H1 (cell line): ENCODE measurements at regions of chr10 and their contacts with region 1.

Region 1: DNA sequence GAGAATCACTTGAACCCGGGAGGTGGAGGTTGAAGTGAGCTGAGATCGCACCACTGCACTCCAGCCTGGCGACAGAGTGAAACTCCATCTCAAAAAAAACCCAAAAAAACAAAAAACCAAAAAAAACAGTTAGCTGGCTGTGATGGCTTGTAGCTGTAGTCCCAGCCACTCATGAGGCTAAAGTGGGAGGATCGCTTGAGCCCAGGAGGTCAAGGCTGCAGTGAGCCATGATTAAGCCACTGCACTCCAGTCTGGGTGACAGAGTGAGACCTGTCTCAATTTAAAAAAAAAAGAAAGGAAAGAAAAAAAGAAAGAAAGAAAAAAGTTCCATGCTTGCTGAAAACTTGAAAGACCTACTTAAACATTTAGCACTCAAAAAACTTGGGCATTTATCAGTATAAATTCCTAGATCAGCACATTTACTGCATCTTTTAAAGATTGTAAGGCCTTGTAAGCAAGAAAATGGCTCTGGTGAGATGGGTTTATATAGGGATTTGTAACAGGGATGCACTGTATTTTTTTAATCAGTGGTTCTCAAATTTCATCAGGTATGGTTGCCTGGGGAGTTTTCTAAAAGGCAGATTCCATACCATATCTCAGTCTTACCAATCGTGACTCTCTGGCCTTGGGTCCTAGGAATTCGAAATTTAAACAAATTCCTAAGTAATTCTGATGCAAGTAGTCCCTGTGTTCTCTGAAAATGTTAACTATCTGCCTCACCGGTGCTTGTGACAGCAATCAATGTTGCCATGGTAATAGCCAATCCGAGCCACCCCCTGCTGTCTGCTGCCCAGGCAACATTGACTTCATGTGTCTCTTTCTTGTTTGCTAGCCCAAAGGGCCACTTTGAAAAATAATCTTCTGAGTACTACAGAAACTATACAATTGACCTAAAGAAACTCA is 11.5 kb upstream of the NT5C2 start:
- DNase-seq: peak; percentile 80 to 90
- H3K4me3 ChIP-seq: peak overlapping the region in 2 of 4 experiments; percentile 12 to 39; a peak in 1 of 8 replicates
- H3K27ac ChIP-seq: peak overlapping the region; percentile 88
- H3K4me1 ChIP-seq: peaks cover 3 to 14% (median 8%) of the 10 kb centered on the region in 4 experiments; a peak in 5 of 7 replicates
- H3K27me3 ChIP-seq: no peaks in the 10 kb centered on the region
- CTCF ChIP-seq: no peak
- EP300 ChIP-seq: peak in 1 of 2 experiments; percentile 96; a peak in 2 of 3 replicates
- POLR2A ChIP-seq: no peak
- RAD21 ChIP-seq: no peak

Region 2: DNA sequence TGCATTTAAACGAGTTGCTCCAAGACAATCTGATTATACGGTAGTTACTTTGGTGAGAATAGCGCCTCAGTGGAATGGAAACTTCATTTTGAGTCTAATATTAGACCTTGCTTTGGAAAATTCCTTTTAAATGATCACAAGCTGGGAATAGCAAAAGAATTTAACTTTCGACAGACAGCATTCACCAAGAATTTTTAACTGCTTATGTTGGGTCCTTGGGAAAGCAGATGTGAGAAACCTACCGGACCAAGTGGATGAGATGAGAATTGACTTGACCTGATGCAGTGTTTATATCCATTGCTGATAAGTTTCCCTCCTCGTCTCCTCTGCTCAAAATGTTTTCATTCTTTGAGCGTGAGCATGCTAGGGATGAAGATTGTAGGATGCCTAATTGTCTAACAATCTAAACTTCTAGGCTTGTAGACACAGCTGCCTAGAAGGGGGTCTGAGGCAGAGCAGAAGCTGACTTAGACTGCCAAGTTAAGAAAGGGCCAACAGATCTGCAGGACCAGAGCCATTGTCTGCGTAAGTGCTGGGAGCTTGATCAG is 159.6 kb before region 1 on chr10:
- CTCF ChIA-PET with region 1: no interaction called
- POLR2A ChIA-PET with region 1: no interaction called
- DNase-seq: no peak
- H3K4me3 ChIP-seq: no peak overlapping the region
- H3K27ac ChIP-seq: no peak overlapping the region
- H3K4me1 ChIP-seq: peaks cover 0 to 14% (median 9%) of the 10 kb centered on the region in 4 experiments; a peak in 5 of 7 replicates
- H3K27me3 ChIP-seq: no peaks in the 10 kb centered on the region
- CTCF ChIP-seq: no peak
- EP300 ChIP-seq: no peak
- POLR2A ChIP-seq: no peak
- RAD21 ChIP-seq: no peak

Region 3: GRCh38 chr10:103111031-103111917 is 93.3 kb before region 1 on chr10:
- CTCF ChIA-PET with region 1: no interaction called
- POLR2A ChIA-PET with region 1: no interaction called
- DNase-seq: no peak
- H3K4me3 ChIP-seq: no peak overlapping the region
- H3K27ac ChIP-seq: no peak overlapping the region
- H3K4me1 ChIP-seq: peaks cover 0 to 5% (median 0%) of the 10 kb centered on the region in 4 experiments; a peak in 1 of 7 replicates
- H3K27me3 ChIP-seq: no peaks in the 10 kb centered on the region
- CTCF ChIP-seq: no peak
- EP300 ChIP-seq: no peak
- POLR2A ChIP-seq: no peak
- RAD21 ChIP-seq: no peak

Region 4: DNA sequence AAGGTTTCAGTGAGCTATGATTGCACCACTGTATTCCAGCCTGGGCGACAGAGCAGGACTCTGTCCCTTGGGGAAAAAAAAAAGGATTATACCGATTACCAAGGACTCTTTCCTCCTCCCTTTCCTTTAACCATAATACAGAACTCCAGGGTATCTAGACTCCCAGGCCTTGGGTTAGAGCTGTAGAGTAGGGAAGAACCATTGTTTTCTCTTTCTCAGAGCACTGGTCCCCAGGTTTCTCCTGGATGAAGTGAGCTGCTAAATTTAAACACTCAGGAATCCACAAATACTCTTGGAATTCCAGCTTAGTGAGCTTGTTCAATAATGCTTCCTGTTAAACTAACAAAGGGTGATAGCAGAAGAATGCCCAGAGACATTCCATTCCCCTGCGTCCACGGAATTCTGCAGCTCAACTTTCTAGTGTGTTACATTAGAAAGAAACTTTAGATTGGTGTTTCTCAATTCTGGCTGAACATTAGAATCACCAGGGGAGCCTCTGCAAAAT is 26.5 kb after region 1 on chr10:
- CTCF ChIA-PET with region 1: interaction called, 4 read pairs
- POLR2A ChIA-PET with region 1: interaction called, 11 read pairs
- DNase-seq: peak in 1 of 2 experiments; percentile 85
- H3K4me3 ChIP-seq: no peak overlapping the region
- H3K27ac ChIP-seq: no peak overlapping the region; the same call in 1 of the 2 replicates
- H3K4me1 ChIP-seq: peaks cover 0 to 18% (median 2%) of the 10 kb centered on the region in 4 experiments; a peak in 3 of 7 replicates
- H3K27me3 ChIP-seq: no peaks in the 10 kb centered on the region; a peak in 1 of 7 replicates
- CTCF ChIP-seq: no peak
- EP300 ChIP-seq: peak in 1 of 2 experiments; percentile 80; a peak in 1 of 3 replicates
- POLR2A ChIP-seq: no peak
- RAD21 ChIP-seq: peak in 1 of 2 experiments; percentile 1; a peak in 1 of 4 replicates